CD14-positive monocyte (primary cell): ENCODE measurements at regions of chr3 and their contacts with region 1.

Region 1: GRCh38 chr3:194070634-194071409 is 65.1 kb upstream of the HES1 start:
- DNase-seq: peak; percentile 79 to 89 (median 87)
- H3K4me3 ChIP-seq: peak overlapping the region; percentile 5 to 73 (median 10)
- H3K4me3 Mint-ChIP-seq: peak overlapping the region; percentile 72 to 80
- H3K27ac ChIP-seq: no peak overlapping the region
- H3K27ac Mint-ChIP-seq: peak overlapping the region in 6 of 7 donors; percentile 40 to 90 (median 72)
- H3K4me1 ChIP-seq: peaks cover 26 to 33% of the 10 kb centered on the region in 2 donors
- H3K4me1 Mint-ChIP-seq: peaks cover 38% of the 10 kb centered on the region
- H3K27me3 ChIP-seq: peaks cover 16 to 22% of the 10 kb centered on the region in 2 donors
- H3K27me3 Mint-ChIP-seq: peaks cover 27 to 47% (median 28%) of the 10 kb centered on the region in 3 donors
- CTCF ChIP-seq: no peak

Region 2: GRCh38 chr3:193407112-193407511 is 663.7 kb before region 1 on chr3:
- intact Hi-C with region 1: no loop called
- DNase-seq: no peak
- H3K4me3 ChIP-seq: no peak overlapping the region
- H3K4me3 Mint-ChIP-seq: no peak overlapping the region
- H3K27ac ChIP-seq: no peak overlapping the region
- H3K27ac Mint-ChIP-seq: no peak overlapping the region
- H3K4me1 ChIP-seq: no peaks in the 10 kb centered on the region
- H3K4me1 Mint-ChIP-seq: no peaks in the 10 kb centered on the region
- H3K27me3 ChIP-seq: no peaks in the 10 kb centered on the region
- H3K27me3 Mint-ChIP-seq: no peaks in the 10 kb centered on the region
- CTCF ChIP-seq: no peak

Region 3: DNA sequence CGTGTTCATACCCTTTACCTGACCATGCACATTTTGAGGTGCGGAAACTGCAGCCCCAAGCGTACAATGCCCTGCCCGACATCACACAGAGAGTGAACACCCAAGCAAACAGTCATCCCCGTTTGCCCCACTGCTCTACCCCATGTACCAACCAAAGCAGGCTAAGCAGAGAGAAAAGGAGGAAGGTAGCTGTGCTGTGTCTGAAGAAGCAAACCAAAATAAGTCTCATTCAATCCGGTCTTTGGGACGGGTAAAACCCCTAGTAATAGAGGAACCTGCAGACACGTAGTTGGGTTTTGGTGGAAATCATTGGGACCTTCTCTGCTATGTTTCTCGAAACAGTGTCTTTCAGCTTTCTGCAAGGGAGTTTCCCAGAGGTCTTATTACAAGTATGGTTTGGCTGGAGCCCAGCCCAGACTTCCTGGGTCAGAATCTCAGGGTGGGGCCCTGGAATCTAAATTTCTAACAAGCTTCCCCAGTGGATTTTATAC is 99.5 kb before region 1 on chr3:
- intact Hi-C with region 1: no loop called
- DNase-seq: peak; percentile 74 to 88 (median 78)
- H3K4me3 ChIP-seq: peak overlapping the region in 1 of 3 experiments; percentile 50
- H3K4me3 Mint-ChIP-seq: peak overlapping the region in 1 of 2 donors; percentile 67
- H3K27ac ChIP-seq: peak overlapping the region in 1 of 2 donors; percentile 50
- H3K27ac Mint-ChIP-seq: peak overlapping the region in 6 of 7 donors; percentile 46 to 85 (median 72)
- H3K4me1 ChIP-seq: peaks cover 15 to 18% of the 10 kb centered on the region in 2 donors
- H3K4me1 Mint-ChIP-seq: peaks cover 18% of the 10 kb centered on the region
- H3K27me3 ChIP-seq: peaks cover 26 to 57% of the 10 kb centered on the region in 2 donors
- H3K27me3 Mint-ChIP-seq: peaks cover 48 to 71% (median 57%) of the 10 kb centered on the region in 3 donors
- CTCF ChIP-seq: no peak

Region 4: GRCh38 chr3:194121891-194122631 is 51.2 kb after region 1 on chr3:
- intact Hi-C with region 1: loop called in 1 of 2 experiments (anchors 5 kb)
- DNase-seq: no peak
- H3K4me3 ChIP-seq: no peak overlapping the region
- H3K4me3 Mint-ChIP-seq: no peak overlapping the region
- H3K27ac ChIP-seq: no peak overlapping the region
- H3K27ac Mint-ChIP-seq: peak overlapping the region in 2 of 7 donors; percentile 45 to 72
- H3K4me1 ChIP-seq: peaks cover 20 to 21% of the 10 kb centered on the region in 2 donors
- H3K4me1 Mint-ChIP-seq: peaks cover 22% of the 10 kb centered on the region
- H3K27me3 ChIP-seq: peaks cover 2 to 4% of the 10 kb centered on the region in 2 donors
- H3K27me3 Mint-ChIP-seq: peaks cover 10 to 36% (median 12%) of the 10 kb centered on the region in 3 donors
- CTCF ChIP-seq: no peak